Activated B cell treated with CpG ODN at 0.5 μM for 24 hours (primary cell): ENCODE measurements at regions of chr1 and their contacts with region 1.

Region 1: GRCh38 chr1:200620273-200621131 is at the start of gene KIF14:
- DNase-seq: peak; percentile 85
- ATAC-seq: peak; percentile 99
- H3K4me3 Mint-ChIP-seq: peak within 1 kb of the TSS; percentile 94
- H3K27ac Mint-ChIP-seq: peak within 1 kb of the TSS; percentile 88
- H3K4me1 Mint-ChIP-seq: peaks cover 11% of the 10 kb centered on the region
- H3K27me3 Mint-ChIP-seq: no peaks in the 10 kb centered on the region
- CTCF ChIP-seq: no peak
- total RNA-seq, gene KIF14: 0.27 and 0.38 TPM in 2 replicates

Region 2: DNA sequence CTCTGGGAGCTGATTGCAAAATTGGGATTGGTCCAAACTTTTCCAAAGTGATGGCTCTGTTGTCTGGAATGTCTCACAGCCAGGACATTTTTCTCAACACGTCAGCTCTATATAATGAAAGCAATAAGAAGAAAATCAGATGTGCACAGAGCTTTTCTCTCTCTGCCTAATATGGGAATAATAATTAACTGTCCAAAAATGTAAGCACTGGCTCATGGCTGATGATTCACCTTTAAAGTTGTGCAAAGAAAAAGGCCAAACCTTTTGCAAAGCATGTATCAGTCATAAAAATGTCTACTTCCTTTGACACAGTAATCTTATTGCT is 241.1 kb before region 1 on chr1:
- CTCF ChIA-PET with region 1: no interaction called
- POLR2A ChIA-PET with region 1: no interaction called
- intact Hi-C with region 1: no loop called
- DNase-seq: no peak
- ATAC-seq: no peak
- H3K4me3 Mint-ChIP-seq: no peak overlapping the region
- H3K27ac Mint-ChIP-seq: no peak overlapping the region
- H3K4me1 Mint-ChIP-seq: peaks cover 39% of the 10 kb centered on the region
- H3K27me3 Mint-ChIP-seq: no peaks in the 10 kb centered on the region
- CTCF ChIP-seq: no peak

Region 3: DNA sequence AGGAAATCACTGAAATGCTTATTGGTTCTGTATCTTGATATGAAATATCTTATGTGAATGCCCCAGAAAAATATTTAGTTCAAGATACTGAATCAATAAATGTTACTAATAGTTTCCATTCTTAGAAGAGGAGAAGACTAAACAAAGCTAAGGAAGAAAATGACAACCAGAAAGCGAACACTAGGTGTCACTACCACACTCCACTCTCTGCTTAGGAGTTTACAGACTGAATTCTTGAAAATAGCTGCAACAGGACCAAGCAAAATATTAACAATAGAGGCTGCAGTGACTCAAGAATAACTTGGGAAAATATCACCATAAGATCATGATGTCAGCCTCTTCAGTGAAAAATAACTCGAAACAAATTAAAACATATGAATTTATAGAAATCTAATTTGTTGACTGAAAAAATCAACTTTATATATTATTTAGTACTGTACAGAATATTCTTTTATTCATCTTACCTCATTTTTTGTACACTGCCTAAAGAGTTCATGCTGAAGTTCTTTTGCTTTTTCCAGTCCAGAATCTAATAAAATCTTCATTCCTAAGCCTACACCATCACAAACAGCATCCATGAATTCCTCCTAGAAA is 61.5 kb before region 1 on chr1:
- CTCF ChIA-PET with region 1: interaction called, 12 read pairs
- POLR2A ChIA-PET with region 1: interaction called, 3 read pairs
- intact Hi-C with region 1: loop called (anchors 5 kb)
- DNase-seq: no peak
- ATAC-seq: no peak
- H3K4me3 Mint-ChIP-seq: no peak overlapping the region
- H3K27ac Mint-ChIP-seq: no peak overlapping the region
- H3K4me1 Mint-ChIP-seq: peaks cover 4% of the 10 kb centered on the region
- H3K27me3 Mint-ChIP-seq: no peaks in the 10 kb centered on the region
- CTCF ChIP-seq: peak; percentile 57

Region 4: GRCh38 chr1:200738740-200739498 is 118.4 kb after region 1 on chr1 and contains the start of gene CAMSAP2:
- CTCF ChIA-PET with region 1: no interaction called
- POLR2A ChIA-PET with region 1: interaction called, 3 read pairs
- intact Hi-C with region 1: loop called (anchors 2 kb)
- DNase-seq: peak; percentile 43
- ATAC-seq: peak; percentile 72
- H3K4me3 Mint-ChIP-seq: peak within 1 kb of the TSS; percentile 91
- H3K27ac Mint-ChIP-seq: peak within 1 kb of the TSS; percentile 76
- H3K4me1 Mint-ChIP-seq: peaks cover 17% of the 10 kb centered on the region
- H3K27me3 Mint-ChIP-seq: peaks cover 19% of the 10 kb centered on the region
- CTCF ChIP-seq: no peak
- total RNA-seq, gene CAMSAP2: 0.71 and 0.86 TPM in 2 replicates

Region 5: DNA sequence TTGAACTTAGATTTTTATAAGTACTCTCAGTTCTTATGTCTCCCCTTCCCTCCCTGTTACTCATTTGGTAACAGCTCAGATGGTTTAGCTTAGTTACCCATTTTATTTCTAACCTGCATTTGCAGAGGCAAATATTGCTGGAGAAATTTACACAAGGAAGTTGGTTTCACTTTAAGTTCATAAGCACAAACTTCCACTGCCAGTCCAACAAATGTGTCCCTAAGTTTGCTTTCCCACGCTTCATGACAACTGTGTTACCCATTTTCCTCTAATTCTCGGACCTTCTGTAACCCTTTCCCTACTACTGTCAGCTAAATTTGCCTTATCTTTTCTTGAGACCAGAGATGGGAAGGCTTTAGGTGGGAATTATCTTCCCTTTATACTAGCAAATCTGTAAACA is 188.3 kb after region 1 on chr1:
- CTCF ChIA-PET with region 1: interaction called, 135 read pairs
- POLR2A ChIA-PET with region 1: no interaction called
- intact Hi-C with region 1: no loop called
- DNase-seq: no peak
- ATAC-seq: no peak
- H3K4me3 Mint-ChIP-seq: no peak overlapping the region
- H3K27ac Mint-ChIP-seq: no peak overlapping the region
- H3K4me1 Mint-ChIP-seq: no peaks in the 10 kb centered on the region
- H3K27me3 Mint-ChIP-seq: peaks cover 11% of the 10 kb centered on the region
- CTCF ChIP-seq: no peak

Region 6: GRCh38 chr1:200971955-200972711 is 351.6 kb after region 1 on chr1:
- CTCF ChIA-PET with region 1: interaction called, 15 read pairs
- POLR2A ChIA-PET with region 1: no interaction called
- intact Hi-C with region 1: loop called (anchors 1 kb)
- DNase-seq: peak; percentile 59
- ATAC-seq: peak; percentile 53
- H3K4me3 Mint-ChIP-seq: no peak overlapping the region
- H3K27ac Mint-ChIP-seq: no peak overlapping the region
- H3K4me1 Mint-ChIP-seq: peaks cover 10% of the 10 kb centered on the region
- H3K27me3 Mint-ChIP-seq: no peaks in the 10 kb centered on the region
- CTCF ChIP-seq: peak; percentile 100

Region 7: GRCh38 chr1:201114236-201115131 is 494.0 kb after region 1 on chr1:
- CTCF ChIA-PET with region 1: interaction called, 4 read pairs
- POLR2A ChIA-PET with region 1: no interaction called
- intact Hi-C with region 1: loop called (anchors 5 kb)
- DNase-seq: peak; percentile 61
- ATAC-seq: peak; percentile 88
- H3K4me3 Mint-ChIP-seq: peak overlapping the region; percentile 82
- H3K27ac Mint-ChIP-seq: no peak overlapping the region
- H3K4me1 Mint-ChIP-seq: peaks cover 2% of the 10 kb centered on the region
- H3K27me3 Mint-ChIP-seq: peaks cover 12% of the 10 kb centered on the region
- CTCF ChIP-seq: peak; percentile 18